ENCODE measurements at regions of chr16 and their contacts with region 1.

Region 1: GRCh38 chr16:589658-590159 is at the start of gene RAB40C:
- DNase-seq: peak; percentile 97
- H3K4me3 ChIP-seq: peak within 1 kb of the TSS; percentile 24 to 79 (median 54)
- H3K27ac ChIP-seq: peak within 1 kb of the TSS; percentile 68
- H3K4me1 ChIP-seq: peaks cover 16% of the 10 kb centered on the region
- H3K27me3 ChIP-seq: no peaks in the 10 kb centered on the region
- CTCF ChIP-seq: peak in 1 of 2 donors; percentile 16
- POLR2A ChIP-seq: no peak
- total RNA-seq, gene RAB40C: 16.7 and 18.8 TPM in 2 replicates

Region 2: GRCh38 chr16:303760-304505 is 285.8 kb before region 1 on chr16:
- CTCF ChIA-PET with region 1: no interaction called
- POLR2A ChIA-PET with region 1: no interaction called
- dilution Hi-C with region 1: no loop called
- intact Hi-C with region 1: no loop called
- DNase-seq: no peak
- H3K4me3 ChIP-seq: no peak overlapping the region
- H3K27ac ChIP-seq: no peak overlapping the region
- H3K4me1 ChIP-seq: no peaks in the 10 kb centered on the region
- H3K27me3 ChIP-seq: no peaks in the 10 kb centered on the region
- CTCF ChIP-seq: no peak
- POLR2A ChIP-seq: no peak

Region 3: GRCh38 chr16:339680-340079 is 250.0 kb before region 1 on chr16:
- CTCF ChIA-PET with region 1: no interaction called
- POLR2A ChIA-PET with region 1: no interaction called
- dilution Hi-C with region 1: no loop called
- intact Hi-C with region 1: no loop called
- DNase-seq: no peak
- H3K4me3 ChIP-seq: no peak overlapping the region
- H3K27ac ChIP-seq: no peak overlapping the region
- H3K4me1 ChIP-seq: no peaks in the 10 kb centered on the region
- H3K27me3 ChIP-seq: no peaks in the 10 kb centered on the region
- CTCF ChIP-seq: no peak
- POLR2A ChIP-seq: no peak

Region 4: GRCh38 chr16:391885-392335 is 197.8 kb before region 1 on chr16:
- CTCF ChIA-PET with region 1: no interaction called
- POLR2A ChIA-PET with region 1: no interaction called
- dilution Hi-C with region 1: no loop called
- intact Hi-C with region 1: loop called (anchors 5 kb)
- DNase-seq: peak; percentile 65
- H3K4me3 ChIP-seq: no peak overlapping the region
- H3K27ac ChIP-seq: no peak overlapping the region
- H3K4me1 ChIP-seq: peaks cover 3% of the 10 kb centered on the region
- H3K27me3 ChIP-seq: no peaks in the 10 kb centered on the region
- CTCF ChIP-seq: peak; percentile 88 to 93
- POLR2A ChIP-seq: no peak

Region 5: GRCh38 chr16:471353-472198 is 118.1 kb before region 1 on chr16:
- CTCF ChIA-PET with region 1: no interaction called
- POLR2A ChIA-PET with region 1: no interaction called
- dilution Hi-C with region 1: no loop called
- intact Hi-C with region 1: no loop called
- DNase-seq: no peak
- H3K4me3 ChIP-seq: no peak overlapping the region
- H3K27ac ChIP-seq: no peak overlapping the region
- H3K4me1 ChIP-seq: no peaks in the 10 kb centered on the region
- H3K27me3 ChIP-seq: no peaks in the 10 kb centered on the region
- CTCF ChIP-seq: no peak
- POLR2A ChIP-seq: no peak

Region 6: GRCh38 chr16:527006-527753 is 62.5 kb before region 1 on chr16 and contains the start of gene CAPN15:
- CTCF ChIA-PET with region 1: no interaction called
- POLR2A ChIA-PET with region 1: interaction called, 12 read pairs
- dilution Hi-C with region 1: no loop called
- intact Hi-C with region 1: no loop called
- DNase-seq: peak; percentile 90
- H3K4me3 ChIP-seq: peak within 1 kb of the TSS; percentile 42 to 81 (median 78)
- H3K27ac ChIP-seq: peak within 1 kb of the TSS; percentile 90
- H3K4me1 ChIP-seq: peaks cover 35% of the 10 kb centered on the region
- H3K27me3 ChIP-seq: no peaks in the 10 kb centered on the region
- CTCF ChIP-seq: no peak
- POLR2A ChIP-seq: peak; percentile 65
- total RNA-seq, gene CAPN15: 65.0 and 70.1 TPM in 2 replicates

Region 7: DNA sequence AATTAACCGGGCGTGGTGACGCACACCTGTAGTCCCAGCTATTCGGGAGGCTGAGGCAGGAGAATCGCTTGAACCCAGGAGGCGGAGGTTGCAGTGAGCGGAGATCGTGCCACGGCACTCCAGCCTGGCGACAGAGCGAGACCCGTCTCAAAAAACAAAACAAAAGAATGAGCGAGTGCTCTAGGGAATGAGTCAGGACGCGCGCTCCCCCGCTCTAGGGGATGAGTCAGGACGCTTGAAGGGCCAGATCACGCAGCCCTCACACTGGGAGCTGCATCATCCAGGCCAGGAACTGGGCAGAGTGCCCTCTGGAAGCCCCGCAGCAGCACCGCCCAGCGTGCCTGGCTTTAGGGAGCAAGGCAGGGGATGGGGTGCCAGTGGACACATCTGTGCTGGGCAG is 37.1 kb after region 1 on chr16:
- CTCF ChIA-PET with region 1: interaction called, 3 read pairs
- POLR2A ChIA-PET with region 1: no interaction called
- dilution Hi-C with region 1: no loop called
- intact Hi-C with region 1: loop called (anchors 2 kb)
- DNase-seq: peak; percentile 79
- H3K4me3 ChIP-seq: no peak overlapping the region
- H3K27ac ChIP-seq: peak overlapping the region; percentile 70
- H3K4me1 ChIP-seq: peaks cover 3% of the 10 kb centered on the region
- H3K27me3 ChIP-seq: no peaks in the 10 kb centered on the region
- CTCF ChIP-seq: no peak
- POLR2A ChIP-seq: peak; percentile 33

Region 8: DNA sequence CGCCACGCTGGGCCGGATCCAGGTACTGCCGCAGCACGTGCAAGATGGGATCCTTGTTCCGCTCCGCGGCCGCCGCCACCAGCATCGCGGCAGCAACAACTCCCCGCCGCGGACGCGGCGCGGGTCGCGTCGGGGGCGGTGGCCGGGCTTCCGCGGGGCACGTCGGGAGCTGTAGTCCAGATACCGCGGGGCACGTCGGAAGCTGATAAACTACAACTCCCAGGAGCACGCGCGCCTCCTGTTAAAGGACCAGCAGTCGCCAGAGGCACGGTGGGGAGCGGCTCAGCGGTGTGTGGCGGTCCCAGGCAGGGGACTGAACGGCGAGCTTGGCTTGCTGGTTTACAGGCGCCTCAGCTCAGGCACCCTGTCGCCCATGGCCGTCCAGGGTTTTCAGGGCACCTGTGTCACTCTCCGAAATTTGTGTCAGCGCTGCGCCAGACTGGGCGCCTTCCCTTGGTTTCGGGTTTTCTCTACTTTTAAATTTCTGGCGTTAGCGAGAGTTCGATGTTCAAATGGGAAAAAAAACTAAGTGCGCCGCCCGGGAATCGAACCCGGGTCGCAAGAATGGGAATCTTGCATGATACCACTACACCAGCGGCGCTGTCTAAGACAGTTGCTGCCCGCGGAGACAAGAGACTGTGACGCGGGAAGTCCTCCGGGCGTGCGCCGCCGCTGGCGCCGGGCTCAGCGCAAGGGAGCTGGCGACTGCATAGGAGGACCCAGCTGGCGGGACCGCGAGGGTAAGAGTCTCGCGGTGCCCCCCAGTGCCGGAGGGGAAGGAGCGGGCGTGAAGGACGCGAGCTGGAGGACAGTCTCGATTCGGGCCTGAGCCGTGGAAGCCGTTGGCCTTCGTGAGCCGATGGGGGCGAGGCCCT is 46.7 kb after region 1 on chr16 and contains the start of gene METTL26:
- CTCF ChIA-PET with region 1: interaction called, 8 read pairs
- POLR2A ChIA-PET with region 1: no interaction called
- dilution Hi-C with region 1: no loop called
- intact Hi-C with region 1: loop called (anchors 1 kb)
- DNase-seq: peak; percentile 93
- H3K4me3 ChIP-seq: peak within 1 kb of the TSS; percentile 37 to 82 (median 61)
- H3K27ac ChIP-seq: peak within 1 kb of the TSS; percentile 68
- H3K4me1 ChIP-seq: peaks cover 9% of the 10 kb centered on the region
- H3K27me3 ChIP-seq: no peaks in the 10 kb centered on the region
- CTCF ChIP-seq: no peak
- POLR2A ChIP-seq: peak; percentile 95
- total RNA-seq, gene METTL26: 112 and 114 TPM in 2 replicates

Region 9: DNA sequence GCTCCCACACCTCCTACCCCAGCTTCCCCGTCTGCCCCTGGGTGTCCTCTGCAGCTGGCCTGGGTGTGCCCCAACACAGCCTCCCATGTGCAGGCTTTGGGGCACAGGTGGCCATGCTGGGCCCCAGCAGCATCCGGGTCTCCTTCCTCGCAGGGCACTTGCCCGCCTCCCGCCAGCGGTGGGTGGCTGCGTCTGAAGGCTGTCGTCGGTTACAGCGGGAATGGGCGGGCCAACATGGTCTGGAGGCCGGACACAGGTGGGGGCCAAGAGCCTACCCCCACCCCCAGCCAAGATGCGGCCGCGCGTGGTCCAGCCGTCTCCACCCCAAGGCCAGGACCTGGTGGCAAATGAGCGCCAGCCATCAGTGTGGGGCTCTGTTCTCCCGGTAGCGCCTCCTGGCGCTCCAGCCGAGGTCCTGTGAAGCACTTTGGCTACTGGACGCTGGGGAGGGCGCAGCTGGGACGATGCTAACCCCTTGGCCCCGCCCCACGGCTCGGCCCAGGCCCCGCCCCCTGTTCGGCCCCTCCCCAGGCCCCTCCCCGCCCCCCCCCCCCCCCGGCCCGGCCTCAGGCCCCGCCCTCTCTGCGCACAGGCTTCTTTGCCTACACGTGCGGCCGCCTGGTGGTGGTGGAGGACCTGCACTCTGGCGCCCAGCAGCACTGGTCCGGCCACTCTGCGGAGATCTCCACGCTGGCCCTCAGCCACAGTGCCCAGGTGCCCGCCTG is 70.9 kb after region 1 on chr16:
- CTCF ChIA-PET with region 1: interaction called, 3 read pairs
- POLR2A ChIA-PET with region 1: no interaction called
- dilution Hi-C with region 1: no loop called
- intact Hi-C with region 1: loop called (anchors 1 kb)
- DNase-seq: peak; percentile 88
- H3K4me3 ChIP-seq: peak overlapping the region in 1 of 3 experiments; percentile 11
- H3K27ac ChIP-seq: no peak overlapping the region
- H3K4me1 ChIP-seq: no peaks in the 10 kb centered on the region
- H3K27me3 ChIP-seq: no peaks in the 10 kb centered on the region
- CTCF ChIP-seq: peak; percentile 38 to 74
- POLR2A ChIP-seq: peak; percentile 56

Region 10: GRCh38 chr16:667780-668518 is 78.2 kb after region 1 on chr16 and contains the start of gene RHOT2:
- CTCF ChIA-PET with region 1: no interaction called
- POLR2A ChIA-PET with region 1: no interaction called
- dilution Hi-C with region 1: no loop called
- intact Hi-C with region 1: loop called (anchors 1 kb)
- DNase-seq: peak; percentile 86
- H3K4me3 ChIP-seq: peak within 1 kb of the TSS; percentile 65 to 80 (median 79)
- H3K27ac ChIP-seq: peak within 1 kb of the TSS; percentile 48
- H3K4me1 ChIP-seq: no peaks in the 10 kb centered on the region
- H3K27me3 ChIP-seq: no peaks in the 10 kb centered on the region
- CTCF ChIP-seq: peak; percentile 70 to 96
- POLR2A ChIP-seq: peak; percentile 79
- total RNA-seq, gene RHOT2: 96.0 and 106 TPM in 2 replicates

Region 11: GRCh38 chr16:714558-715476 is 125.1 kb after region 1 on chr16 and contains the start of gene METRN:
- CTCF ChIA-PET with region 1: no interaction called
- POLR2A ChIA-PET with region 1: no interaction called
- dilution Hi-C with region 1: no loop called
- intact Hi-C with region 1: no loop called
- DNase-seq: peak; percentile 78
- H3K4me3 ChIP-seq: peak within 1 kb of the TSS; percentile 42 to 58 (median 51)
- H3K27ac ChIP-seq: no peak within 1 kb of the TSS
- H3K4me1 ChIP-seq: peaks cover 10% of the 10 kb centered on the region
- H3K27me3 ChIP-seq: no peaks in the 10 kb centered on the region
- CTCF ChIP-seq: no peak
- POLR2A ChIP-seq: no peak
- total RNA-seq, gene METRN: 14.1 and 16.1 TPM in 2 replicates